H1 (cell line): ENCODE measurements at regions of chr6 and their contacts with region 1.

Region 1: DNA sequence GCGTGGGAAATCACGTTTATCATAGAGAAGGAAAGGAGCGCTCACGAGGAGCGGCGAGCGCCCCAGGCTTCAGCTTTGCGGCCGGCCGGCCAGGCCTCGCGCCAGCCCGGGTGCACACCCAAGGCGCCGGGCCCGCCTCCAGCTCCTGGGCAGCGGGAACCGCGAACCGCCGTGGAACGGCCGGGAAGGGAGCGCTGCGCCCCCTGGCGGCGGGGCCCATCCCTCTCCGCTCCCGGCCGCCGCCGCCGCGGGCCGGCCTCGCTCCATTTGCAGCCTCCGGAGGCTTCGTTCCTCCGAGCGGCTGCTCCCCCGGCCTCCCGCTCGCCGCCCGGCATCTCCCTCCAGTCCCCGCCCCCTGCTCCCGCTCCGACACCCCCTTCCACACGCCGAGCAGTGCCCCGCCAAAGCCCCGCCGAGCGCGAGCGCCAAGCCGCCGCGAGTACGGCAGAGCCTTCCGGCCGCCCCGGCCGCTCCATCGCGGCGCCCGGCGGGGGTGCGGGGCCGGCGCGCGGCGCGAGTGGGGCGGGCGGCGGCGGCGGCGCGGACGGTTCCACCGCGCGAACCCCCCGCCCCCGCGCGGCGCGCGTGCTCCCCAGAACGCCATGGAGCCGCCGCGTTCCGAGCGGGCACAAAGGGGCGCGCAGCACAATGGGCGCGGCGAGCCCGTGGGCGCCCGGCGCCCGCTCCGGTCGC is 956 bp downstream of the BEND3 start:
- DNase-seq: peak in 1 of 2 experiments; percentile 85
- H3K4me3 ChIP-seq: peak overlapping the region; percentile 53 to 81 (median 60)
- H3K27ac ChIP-seq: peak overlapping the region; percentile 83
- H3K4me1 ChIP-seq: peaks cover 11 to 17% (median 14%) of the 10 kb centered on the region in 4 experiments
- H3K27me3 ChIP-seq: no peaks in the 10 kb centered on the region
- CTCF ChIP-seq: peak; percentile 65 to 73 (median 69)
- EP300 ChIP-seq: no peak
- POLR2A ChIP-seq: no peak; a peak in 1 of 3 replicates
- RAD21 ChIP-seq: peak; percentile 36 to 64; a peak in 3 of 4 replicates

Region 2: GRCh38 chr6:106746660-106747059 is 367.7 kb before region 1 on chr6:
- CTCF ChIA-PET with region 1: no interaction called
- POLR2A ChIA-PET with region 1: no interaction called
- DNase-seq: no peak
- H3K4me3 ChIP-seq: no peak overlapping the region
- H3K27ac ChIP-seq: no peak overlapping the region
- H3K4me1 ChIP-seq: peaks cover 8 to 22% (median 19%) of the 10 kb centered on the region in 4 experiments
- H3K27me3 ChIP-seq: no peaks in the 10 kb centered on the region
- CTCF ChIP-seq: no peak
- EP300 ChIP-seq: no peak
- POLR2A ChIP-seq: no peak
- RAD21 ChIP-seq: no peak

Region 3: GRCh38 chr6:107083047-107083768 is 31.2 kb before region 1 on chr6:
- CTCF ChIA-PET with region 1: interaction called, 9 read pairs
- POLR2A ChIA-PET with region 1: interaction called, 10 read pairs
- DNase-seq: no peak
- H3K4me3 ChIP-seq: no peak overlapping the region
- H3K27ac ChIP-seq: no peak overlapping the region
- H3K4me1 ChIP-seq: no peaks in the 10 kb centered on the region; a peak in 1 of 7 replicates
- H3K27me3 ChIP-seq: no peaks in the 10 kb centered on the region
- CTCF ChIP-seq: no peak
- EP300 ChIP-seq: no peak
- POLR2A ChIP-seq: no peak
- RAD21 ChIP-seq: no peak

Region 4: GRCh38 chr6:107102414-107102990 is 11.9 kb before region 1 on chr6:
- CTCF ChIA-PET with region 1: interaction called, 9 read pairs
- POLR2A ChIA-PET with region 1: interaction called, 53 read pairs
- DNase-seq: no peak
- H3K4me3 ChIP-seq: no peak overlapping the region
- H3K27ac ChIP-seq: no peak overlapping the region
- H3K4me1 ChIP-seq: peaks cover 18 to 28% (median 24%) of the 10 kb centered on the region in 4 experiments
- H3K27me3 ChIP-seq: no peaks in the 10 kb centered on the region
- CTCF ChIP-seq: no peak
- EP300 ChIP-seq: no peak
- POLR2A ChIP-seq: no peak
- RAD21 ChIP-seq: no peak

Region 5: GRCh38 chr6:107124934-107125348 is 10.6 kb after region 1 on chr6:
- CTCF ChIA-PET with region 1: interaction called, 10 read pairs
- POLR2A ChIA-PET with region 1: interaction called, 26 read pairs
- DNase-seq: peak in 1 of 2 experiments; percentile 47
- H3K4me3 ChIP-seq: no peak overlapping the region
- H3K27ac ChIP-seq: no peak overlapping the region
- H3K4me1 ChIP-seq: peaks cover 2 to 14% (median 8%) of the 10 kb centered on the region in 4 experiments
- H3K27me3 ChIP-seq: no peaks in the 10 kb centered on the region
- CTCF ChIP-seq: no peak
- EP300 ChIP-seq: no peak
- POLR2A ChIP-seq: no peak
- RAD21 ChIP-seq: peak in 1 of 2 experiments; percentile 21; a peak in 1 of 4 replicates

Region 6: GRCh38 chr6:107132330-107132954 is 18.1 kb after region 1 on chr6:
- CTCF ChIA-PET with region 1: interaction called, 6 read pairs
- POLR2A ChIA-PET with region 1: interaction called, 26 read pairs
- DNase-seq: no peak
- H3K4me3 ChIP-seq: no peak overlapping the region
- H3K27ac ChIP-seq: no peak overlapping the region
- H3K4me1 ChIP-seq: peaks cover 0 to 8% (median 2%) of the 10 kb centered on the region in 4 experiments; a peak in 6 of 7 replicates
- H3K27me3 ChIP-seq: no peaks in the 10 kb centered on the region
- CTCF ChIP-seq: peak in 1 of 3 experiments; percentile 37; a peak in 1 of 4 replicates
- EP300 ChIP-seq: no peak
- POLR2A ChIP-seq: no peak
- RAD21 ChIP-seq: peak; percentile 35 to 54; a peak in 3 of 4 replicates